ENCODE measurements at regions of chr19 and their contacts with region 1.

Region 1: GRCh38 chr19:48954595-48955310 is at the start of gene BAX:
- DNase-seq: peak; percentile 98
- CTCF ChIP-seq: no peak

Region 2: GRCh38 chr19:48637170-48637947 is 317.4 kb before region 1 on chr19 and contains the start of gene DBP:
- in situ Hi-C with region 1: loop called (anchors 25 kb)
- DNase-seq: peak; percentile 97
- CTCF ChIP-seq: no peak

Region 3: GRCh38 chr19:48819366-48819816 is 135.4 kb before region 1 on chr19:
- in situ Hi-C with region 1: no loop called
- DNase-seq: no peak
- CTCF ChIP-seq: no peak

Region 4: DNA sequence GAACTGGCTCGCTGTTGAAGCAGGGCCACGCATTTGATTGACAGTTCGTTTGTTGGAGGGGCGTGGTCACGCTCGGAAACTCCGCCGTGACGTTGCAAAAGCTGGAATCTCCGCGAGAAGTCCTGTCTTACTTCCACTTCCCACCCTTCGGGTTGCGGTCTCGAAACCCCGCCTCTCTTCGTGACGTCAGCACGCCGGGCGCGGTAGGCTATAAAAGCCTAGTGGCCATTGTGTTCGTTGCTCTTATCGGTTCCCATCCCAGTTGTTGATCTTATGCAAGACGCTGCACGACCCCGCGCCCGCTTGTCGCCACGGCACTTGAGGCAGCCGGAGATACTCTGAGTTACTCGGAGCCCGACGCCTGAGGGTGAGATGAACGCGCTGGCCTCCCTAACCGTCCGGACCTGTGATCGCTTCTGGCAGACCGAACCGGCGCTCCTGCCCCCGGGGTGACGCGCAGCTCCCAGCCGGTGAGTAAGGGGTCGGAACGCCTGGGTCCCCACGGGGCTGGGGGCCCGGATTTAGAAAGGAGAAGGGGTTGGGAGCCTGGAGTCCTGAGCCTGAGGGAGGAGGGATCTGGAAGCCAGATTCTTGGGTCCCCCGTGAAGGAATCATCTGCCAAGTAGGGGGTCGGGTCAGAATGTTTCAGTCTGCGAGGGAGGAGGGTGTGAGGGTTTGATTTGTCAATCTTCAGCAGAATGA is 82.4 kb before region 1 on chr19 and contains the start of gene PPP1R15A:
- in situ Hi-C with region 1: loop called (anchors 25 kb)
- DNase-seq: peak; percentile 97
- CTCF ChIP-seq: no peak

Region 5: DNA sequence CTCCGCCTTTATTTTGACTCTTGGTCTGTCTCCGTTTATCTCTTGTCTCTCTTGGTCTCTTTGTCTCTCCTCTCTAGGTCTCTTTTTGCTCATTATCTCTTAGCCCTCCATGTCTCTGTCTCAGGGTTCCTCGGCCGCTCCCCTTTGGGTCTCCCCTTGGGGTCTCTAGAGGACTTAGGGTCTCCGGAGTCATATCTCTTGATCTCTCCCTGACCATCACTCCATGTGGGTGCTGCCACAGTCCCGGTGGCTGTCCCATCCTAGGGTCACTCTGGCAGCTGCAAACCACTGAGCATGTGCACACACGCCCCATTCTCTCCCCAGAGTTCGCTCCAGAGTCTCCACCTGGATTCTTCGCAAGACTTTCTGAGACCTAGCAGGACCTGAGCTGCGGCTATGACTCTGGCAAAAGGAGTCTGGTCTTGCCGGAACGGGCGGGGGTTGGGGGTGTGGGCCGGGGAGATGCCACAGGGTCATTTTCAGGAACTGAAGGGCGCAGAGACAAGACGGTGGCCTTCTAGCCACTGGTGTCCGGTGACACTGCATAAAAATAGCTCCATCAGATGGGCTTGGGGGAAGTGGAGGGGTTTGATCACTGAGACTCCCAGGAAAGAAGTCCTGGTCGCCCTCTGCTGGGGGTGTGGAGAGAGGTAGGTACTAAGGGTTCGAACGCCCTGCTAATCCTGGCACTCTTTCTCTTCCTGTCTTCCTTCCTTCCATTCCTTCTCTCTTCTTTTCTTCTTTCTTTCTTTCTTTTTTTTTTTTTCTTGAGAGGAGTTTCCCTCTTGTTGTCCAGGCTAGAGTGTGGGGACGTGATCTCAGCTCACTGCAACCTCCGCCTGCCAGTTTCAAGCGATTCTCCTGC is 119.0 kb after region 1 on chr19:
- in situ Hi-C with region 1: no loop called
- DNase-seq: peak; percentile 28
- CTCF ChIP-seq: peak; percentile 6